MCF 10A (cell line): ENCODE measurements at regions of chr9 and their contacts with region 1.

Region 1: GRCh38 chr9:136400038-136400834 is at the start of gene SNAPC4:
- DNase-seq: peak; percentile 84
- H3K4me3 Mint-ChIP-seq: peak within 1 kb of the TSS; percentile 81
- H3K27ac Mint-ChIP-seq: peak within 1 kb of the TSS; percentile 69
- H3K4me1 Mint-ChIP-seq: no peaks in the 10 kb centered on the region
- H3K27me3 Mint-ChIP-seq: no peaks in the 10 kb centered on the region
- CTCF ChIP-seq: peak; percentile 94
- total RNA-seq, gene SNAPC4: 9.6 and 9.9 TPM in 2 replicates

Region 2: GRCh38 chr9:136138566-136138965 is 261.7 kb before region 1 on chr9:
- CTCF ChIA-PET with region 1: no interaction called
- POLR2A ChIA-PET with region 1: no interaction called
- intact Hi-C with region 1: no loop called
- DNase-seq: peak; percentile 54
- H3K4me3 Mint-ChIP-seq: no peak overlapping the region
- H3K27ac Mint-ChIP-seq: no peak overlapping the region
- H3K4me1 Mint-ChIP-seq: no peaks in the 10 kb centered on the region
- H3K27me3 Mint-ChIP-seq: peaks cover 16% of the 10 kb centered on the region
- CTCF ChIP-seq: no peak

Region 3: DNA sequence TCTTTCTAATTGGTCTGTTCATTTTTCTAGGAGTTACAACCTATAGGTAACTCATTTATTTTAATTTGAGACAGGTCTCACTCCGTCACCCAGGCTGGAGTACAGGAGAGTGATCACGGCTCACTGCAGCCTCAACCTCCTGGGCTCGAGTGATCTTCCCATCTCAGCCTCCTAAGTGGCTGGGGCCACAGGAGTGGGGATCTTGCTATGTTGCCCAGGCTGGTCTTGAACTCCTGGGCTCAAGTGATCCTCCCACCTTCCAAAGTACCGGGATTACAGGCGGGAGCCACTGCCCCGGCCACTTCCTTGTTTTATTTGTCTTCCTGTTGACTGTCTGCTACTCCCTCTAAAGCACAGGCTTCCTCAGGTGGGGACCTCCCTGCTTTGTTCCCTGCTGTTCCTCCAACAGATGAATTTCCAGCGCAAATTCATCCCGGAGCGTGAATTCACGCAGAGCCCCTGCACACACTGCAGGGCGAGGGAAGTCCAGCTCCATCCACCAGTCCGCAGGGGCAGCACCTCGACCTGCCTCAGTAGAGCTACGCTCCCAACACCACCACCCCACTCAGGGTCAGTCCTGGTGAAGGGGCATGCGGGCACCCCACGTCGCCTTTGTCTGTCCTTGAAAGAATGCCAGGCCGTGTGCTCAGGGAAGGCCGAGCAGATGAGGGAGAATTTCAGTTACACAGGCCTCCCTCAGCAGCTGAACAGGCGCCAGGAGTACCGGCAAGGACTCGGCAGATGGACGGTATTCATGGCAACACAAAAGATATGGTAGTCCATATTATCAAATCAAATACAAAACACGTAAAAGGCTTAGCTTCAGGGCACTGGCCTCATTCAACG is 160.9 kb before region 1 on chr9:
- CTCF ChIA-PET with region 1: no interaction called
- POLR2A ChIA-PET with region 1: no interaction called
- intact Hi-C with region 1: no loop called
- DNase-seq: no peak
- H3K4me3 Mint-ChIP-seq: no peak overlapping the region
- H3K27ac Mint-ChIP-seq: no peak overlapping the region
- H3K4me1 Mint-ChIP-seq: peaks cover 16% of the 10 kb centered on the region
- H3K27me3 Mint-ChIP-seq: no peaks in the 10 kb centered on the region
- CTCF ChIP-seq: no peak

Region 4: DNA sequence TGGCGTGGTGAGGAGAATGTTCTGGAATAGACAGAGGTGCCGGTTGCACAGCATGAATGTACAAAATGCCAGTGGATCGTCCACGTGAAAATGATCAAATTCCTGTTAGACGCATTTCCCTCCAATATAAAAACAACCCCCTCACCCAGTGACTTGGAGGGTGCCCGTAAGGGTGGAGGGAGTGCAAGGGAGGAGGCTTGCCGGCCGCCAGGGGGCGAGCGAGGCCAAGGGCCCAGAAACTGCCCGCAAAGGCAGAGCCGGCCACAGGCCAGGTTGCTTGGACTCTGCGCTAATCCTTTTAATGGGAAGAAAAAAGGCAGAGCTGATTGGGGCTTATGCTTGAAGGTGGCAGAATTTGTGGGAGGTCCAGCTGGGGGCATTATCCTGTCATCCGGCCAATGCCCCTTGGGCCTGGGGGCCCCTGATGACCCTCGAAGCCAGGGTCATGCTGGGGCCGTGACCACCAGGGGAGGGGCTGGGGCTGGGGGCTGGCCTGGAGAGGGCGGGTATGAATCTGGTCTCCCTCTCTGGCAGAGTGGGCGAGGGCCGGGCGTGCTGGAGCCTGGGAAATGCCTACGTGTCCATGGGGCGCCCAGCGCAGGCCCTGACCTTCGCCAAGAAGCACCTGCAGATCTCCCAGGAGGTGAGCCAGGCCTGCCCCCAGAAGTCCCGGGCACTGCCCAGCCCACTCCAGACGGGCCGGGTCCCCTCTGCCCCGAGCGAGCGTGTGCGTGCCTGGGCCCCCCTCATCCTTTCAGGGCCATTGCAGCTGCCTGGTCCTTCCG is 60.9 kb before region 1 on chr9:
- CTCF ChIA-PET with region 1: interaction called, 7 read pairs
- POLR2A ChIA-PET with region 1: no interaction called
- intact Hi-C with region 1: loop called (anchors 1 kb)
- DNase-seq: peak; percentile 73
- H3K4me3 Mint-ChIP-seq: no peak overlapping the region
- H3K27ac Mint-ChIP-seq: no peak overlapping the region
- H3K4me1 Mint-ChIP-seq: no peaks in the 10 kb centered on the region
- H3K27me3 Mint-ChIP-seq: no peaks in the 10 kb centered on the region
- CTCF ChIP-seq: peak; percentile 93

Region 5: GRCh38 chr9:136363606-136364370 is 36.4 kb before region 1 on chr9 and contains the start of gene DNLZ:
- CTCF ChIA-PET with region 1: interaction called, 7 read pairs
- POLR2A ChIA-PET with region 1: interaction called, 15 read pairs
- intact Hi-C with region 1: no loop called
- DNase-seq: peak; percentile 81
- H3K4me3 Mint-ChIP-seq: peak within 1 kb of the TSS; percentile 74
- H3K27ac Mint-ChIP-seq: peak within 1 kb of the TSS; percentile 51
- H3K4me1 Mint-ChIP-seq: no peaks in the 10 kb centered on the region
- H3K27me3 Mint-ChIP-seq: no peaks in the 10 kb centered on the region
- CTCF ChIP-seq: peak; percentile 90
- total RNA-seq, gene DNLZ: 24.5 and 30.5 TPM in 2 replicates

Region 6: DNA sequence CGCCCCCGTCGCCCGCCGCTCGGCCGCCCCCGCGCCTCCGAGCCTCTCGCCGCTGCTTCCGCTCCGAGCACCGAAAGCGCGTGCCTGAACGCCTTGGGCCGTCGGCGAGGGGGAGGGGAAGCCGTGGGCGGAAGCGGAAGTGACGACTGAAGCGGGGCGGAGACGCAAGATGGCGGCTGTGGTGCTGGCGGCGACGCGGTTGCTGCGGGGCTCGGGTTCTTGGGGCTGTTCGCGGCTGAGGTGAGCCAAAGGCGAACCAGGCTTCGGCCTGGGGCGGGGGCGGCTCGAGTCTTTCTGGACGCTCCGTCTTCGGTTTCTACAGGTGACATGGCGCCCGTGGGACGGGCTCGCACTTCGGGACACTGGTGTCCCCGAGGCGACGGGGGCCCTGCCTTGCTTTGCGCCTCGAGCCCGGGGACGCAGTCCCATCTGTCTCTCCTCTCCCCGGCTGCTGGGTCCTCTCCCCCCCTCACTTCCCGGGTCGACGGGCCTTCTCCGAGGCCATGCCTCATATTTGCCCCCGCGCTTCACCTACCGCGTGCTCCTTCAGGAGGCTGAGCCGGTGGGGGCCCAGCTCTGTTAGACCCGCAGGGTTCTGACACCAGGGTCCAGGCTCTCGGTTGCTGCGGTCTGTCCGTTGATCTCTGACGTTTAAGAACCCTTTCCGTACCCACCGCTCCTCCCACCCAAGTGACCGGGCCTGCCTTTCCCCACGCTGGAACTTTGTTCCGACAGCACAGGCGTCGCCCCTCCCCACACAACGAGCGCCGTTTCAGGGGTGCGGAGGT is 10.5 kb after region 1 on chr9 and contains the starts of genes ENTR1 and PMPCA:
- CTCF ChIA-PET with region 1: interaction called, 14 read pairs
- POLR2A ChIA-PET with region 1: interaction called, 37 read pairs
- intact Hi-C with region 1: no loop called
- DNase-seq: peak; percentile 90
- H3K4me3 Mint-ChIP-seq: peak within 1 kb of the TSS; percentile 96
- H3K27ac Mint-ChIP-seq: peak within 1 kb of the TSS; percentile 97
- H3K4me1 Mint-ChIP-seq: peaks cover 19% of the 10 kb centered on the region
- H3K27me3 Mint-ChIP-seq: no peaks in the 10 kb centered on the region
- CTCF ChIP-seq: no peak
- total RNA-seq, gene ENTR1: 58.9 and 82.2 TPM in 2 replicates
- total RNA-seq, gene PMPCA: 66.0 and 66.3 TPM in 2 replicates